B cell (primary cell): ENCODE measurements at regions of chr7 and their contacts with region 1.

Region 1: DNA sequence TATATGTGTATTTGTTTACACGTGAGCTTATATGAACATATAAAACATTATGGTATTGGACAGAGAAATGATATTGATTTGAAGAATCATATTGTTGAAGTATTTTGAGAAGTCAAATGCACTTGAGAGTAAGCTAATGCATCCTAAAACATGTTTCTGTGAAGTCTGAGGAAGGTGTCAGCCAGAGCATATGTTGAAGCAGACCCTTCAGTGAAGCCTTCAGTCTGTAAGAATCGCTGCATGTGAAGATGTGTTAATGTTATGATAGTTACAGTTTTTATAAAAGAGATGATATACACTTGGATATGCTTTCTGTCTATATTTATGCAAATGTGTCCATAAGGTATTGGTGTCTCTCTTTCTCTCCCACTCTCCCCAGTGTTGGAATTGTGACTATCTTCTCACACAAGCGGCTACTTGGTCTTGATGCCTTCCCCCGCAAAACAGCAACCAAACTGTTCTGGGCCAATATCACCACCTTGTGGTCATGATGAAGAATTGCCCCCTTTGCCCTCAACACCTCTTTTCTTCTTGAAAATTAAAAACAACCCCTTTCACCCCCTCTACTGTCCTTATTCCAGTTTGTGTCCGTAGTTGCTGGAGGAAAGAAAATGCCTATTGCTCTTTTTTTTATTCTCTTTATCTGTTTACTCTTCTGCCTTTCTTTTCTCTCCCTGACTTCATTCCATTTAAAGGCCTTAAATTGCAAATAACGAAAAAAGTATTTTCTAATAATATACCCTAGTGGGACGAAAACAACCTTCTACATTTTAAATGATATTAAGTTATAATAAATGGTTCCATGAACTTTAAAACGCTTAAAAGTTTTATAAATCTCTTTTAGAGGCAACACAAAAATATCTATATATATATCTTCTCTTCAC is 64.9 kb downstream of the IKZF1 start:
- DNase-seq: peak; percentile 83
- ATAC-seq: peak; percentile 70
- H3K4me3 ChIP-seq: no peak overlapping the region
- H3K4me3 Mint-ChIP-seq: no peak overlapping the region
- H3K27ac ChIP-seq: peak overlapping the region in 1 of 2 donors; percentile 71
- H3K27ac Mint-ChIP-seq: peak overlapping the region; percentile 74
- H3K4me1 ChIP-seq: peaks cover 35 to 58% of the 10 kb centered on the region in 2 donors
- H3K4me1 Mint-ChIP-seq: peaks cover 91% of the 10 kb centered on the region
- H3K27me3 ChIP-seq: no peaks in the 10 kb centered on the region
- H3K27me3 Mint-ChIP-seq: no peaks in the 10 kb centered on the region
- CTCF ChIP-seq: peak; percentile 92

Region 2: GRCh38 chr7:50092579-50093491 is 276.6 kb before region 1 on chr7 and contains the start of gene ZPBP:
- CTCF ChIA-PET with region 1: interaction called, 5 read pairs
- POLR2A ChIA-PET with region 1: no interaction called
- intact Hi-C with region 1: loop called (anchors 1 kb)
- DNase-seq: peak; percentile 83
- ATAC-seq: peak; percentile 80
- H3K4me3 ChIP-seq: peak within 1 kb of the TSS; percentile 46 to 82 (median 62)
- H3K4me3 Mint-ChIP-seq: peak within 1 kb of the TSS; percentile 94
- H3K27ac ChIP-seq: peak within 1 kb of the TSS; percentile 35 to 43
- H3K27ac Mint-ChIP-seq: peak within 1 kb of the TSS; percentile 72
- H3K4me1 ChIP-seq: peaks cover 4 to 5% of the 10 kb centered on the region in 2 donors
- H3K4me1 Mint-ChIP-seq: peaks cover 5% of the 10 kb centered on the region
- H3K27me3 ChIP-seq: no peaks in the 10 kb centered on the region
- H3K27me3 Mint-ChIP-seq: no peaks in the 10 kb centered on the region
- CTCF ChIP-seq: peak; percentile 97
- total RNA-seq, gene ZPBP: not detected in 2 replicates

Region 3: GRCh38 chr7:50212666-50213621 is 156.4 kb before region 1 on chr7:
- CTCF ChIA-PET with region 1: interaction called, 241 read pairs
- POLR2A ChIA-PET with region 1: interaction called, 4 read pairs
- intact Hi-C with region 1: no loop called
- DNase-seq: peak; percentile 63
- ATAC-seq: peak; percentile 87
- H3K4me3 ChIP-seq: no peak overlapping the region
- H3K4me3 Mint-ChIP-seq: peak overlapping the region; percentile 20
- H3K27ac ChIP-seq: no peak overlapping the region
- H3K27ac Mint-ChIP-seq: peak overlapping the region; percentile 59
- H3K4me1 ChIP-seq: peaks cover 24 to 28% of the 10 kb centered on the region in 2 donors
- H3K4me1 Mint-ChIP-seq: peaks cover 37% of the 10 kb centered on the region
- H3K27me3 ChIP-seq: no peaks in the 10 kb centered on the region
- H3K27me3 Mint-ChIP-seq: no peaks in the 10 kb centered on the region
- CTCF ChIP-seq: no peak

Region 4: GRCh38 chr7:50298811-50299562 is 70.4 kb before region 1 on chr7:
- CTCF ChIA-PET with region 1: interaction called, 111 read pairs
- POLR2A ChIA-PET with region 1: no interaction called
- intact Hi-C with region 1: no loop called
- DNase-seq: peak; percentile 4
- ATAC-seq: no peak
- H3K4me3 ChIP-seq: no peak overlapping the region
- H3K4me3 Mint-ChIP-seq: no peak overlapping the region
- H3K27ac ChIP-seq: peak overlapping the region in 1 of 2 donors; percentile 43
- H3K27ac Mint-ChIP-seq: no peak overlapping the region
- H3K4me1 ChIP-seq: peaks cover 4 to 15% of the 10 kb centered on the region in 2 donors
- H3K4me1 Mint-ChIP-seq: peaks cover 16% of the 10 kb centered on the region
- H3K27me3 ChIP-seq: no peaks in the 10 kb centered on the region
- H3K27me3 Mint-ChIP-seq: no peaks in the 10 kb centered on the region
- CTCF ChIP-seq: no peak

Region 5: GRCh38 chr7:50317221-50317678 is 52.1 kb before region 1 on chr7:
- CTCF ChIA-PET with region 1: interaction called, 111 read pairs
- POLR2A ChIA-PET with region 1: no interaction called
- intact Hi-C with region 1: no loop called
- DNase-seq: peak; percentile 86
- ATAC-seq: peak; percentile 74
- H3K4me3 ChIP-seq: peak overlapping the region in 1 of 5 experiments; percentile 37
- H3K4me3 Mint-ChIP-seq: peak overlapping the region; percentile 73
- H3K27ac ChIP-seq: peak overlapping the region; percentile 54 to 83
- H3K27ac Mint-ChIP-seq: peak overlapping the region; percentile 96
- H3K4me1 ChIP-seq: peaks cover 81 to 86% of the 10 kb centered on the region in 2 donors
- H3K4me1 Mint-ChIP-seq: peaks cover 93% of the 10 kb centered on the region
- H3K27me3 ChIP-seq: no peaks in the 10 kb centered on the region
- H3K27me3 Mint-ChIP-seq: no peaks in the 10 kb centered on the region
- CTCF ChIP-seq: peak; percentile 32

Region 6: DNA sequence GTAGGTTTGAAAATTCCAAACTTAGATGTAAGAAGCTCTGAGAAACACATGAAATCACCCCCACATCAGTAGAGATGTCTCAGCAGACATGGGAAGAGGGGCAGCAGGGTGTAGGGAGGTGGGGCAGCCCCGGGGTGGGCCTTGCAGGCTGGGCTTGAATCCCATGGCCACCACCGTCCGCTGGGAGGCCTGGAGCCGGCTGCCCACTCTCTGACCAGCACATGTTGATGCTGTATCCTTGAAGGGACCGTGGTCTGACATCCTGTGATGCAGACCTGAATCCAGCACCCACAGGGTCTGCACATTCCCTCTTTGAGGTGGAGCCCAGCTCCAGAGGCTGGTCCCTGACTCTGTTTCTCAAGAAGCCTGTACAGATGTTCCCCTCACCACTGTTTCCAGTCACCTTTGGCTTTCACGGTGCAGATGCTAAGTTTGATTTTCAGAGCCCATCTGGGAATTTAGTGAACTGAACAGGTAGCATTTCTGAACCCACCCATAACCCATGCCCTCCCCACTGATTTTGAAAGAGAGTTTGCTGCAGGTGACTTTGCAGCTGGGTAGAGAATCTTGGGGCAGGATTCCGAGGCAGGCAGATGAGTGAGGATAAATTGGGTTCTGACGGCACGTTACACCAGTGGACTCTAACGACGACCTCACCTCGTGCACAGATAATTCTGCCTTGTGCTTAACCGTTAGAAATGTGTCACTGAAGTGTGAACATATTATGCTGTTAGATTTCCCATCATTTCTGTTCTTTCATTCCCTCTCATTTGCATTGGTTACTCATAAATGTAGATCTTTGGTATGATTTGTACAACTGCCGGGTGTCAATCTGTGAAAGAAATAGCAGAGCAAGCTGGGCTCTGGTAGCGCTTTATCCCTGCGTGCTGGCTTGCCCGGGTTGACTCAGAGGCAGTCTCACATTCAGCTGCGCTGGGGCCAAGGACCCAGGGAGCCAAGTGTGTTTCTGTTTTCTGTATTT is 19.1 kb before region 1 on chr7:
- CTCF ChIA-PET with region 1: interaction called, 15 read pairs
- POLR2A ChIA-PET with region 1: interaction called, 4 read pairs
- intact Hi-C with region 1: loop called (anchors 2 kb)
- DNase-seq: peak; percentile 40
- ATAC-seq: peak; percentile 42
- H3K4me3 ChIP-seq: peak overlapping the region in 2 of 5 experiments; percentile 3 to 17
- H3K4me3 Mint-ChIP-seq: peak overlapping the region; percentile 73
- H3K27ac ChIP-seq: peak overlapping the region; percentile 31 to 90
- H3K27ac Mint-ChIP-seq: peak overlapping the region; percentile 88
- H3K4me1 ChIP-seq: peaks cover 49 to 86% of the 10 kb centered on the region in 2 donors
- H3K4me1 Mint-ChIP-seq: peaks cover 90% of the 10 kb centered on the region
- H3K27me3 ChIP-seq: no peaks in the 10 kb centered on the region
- H3K27me3 Mint-ChIP-seq: no peaks in the 10 kb centered on the region
- CTCF ChIP-seq: no peak

Region 7: GRCh38 chr7:50409856-50410745 is 40.7 kb after region 1 on chr7:
- CTCF ChIA-PET with region 1: interaction called, 182 read pairs
- POLR2A ChIA-PET with region 1: interaction called, 4 read pairs
- intact Hi-C with region 1: loop called (anchors 2 kb)
- DNase-seq: peak; percentile 87
- ATAC-seq: peak; percentile 63
- H3K4me3 ChIP-seq: no peak overlapping the region
- H3K4me3 Mint-ChIP-seq: peak overlapping the region; percentile 83
- H3K27ac ChIP-seq: peak overlapping the region; percentile 90 to 94
- H3K27ac Mint-ChIP-seq: peak overlapping the region; percentile 99
- H3K4me1 ChIP-seq: peaks cover 97% of the 10 kb centered on the region in 2 donors
- H3K4me1 Mint-ChIP-seq: peaks cover 95% of the 10 kb centered on the region
- H3K27me3 ChIP-seq: no peaks in the 10 kb centered on the region
- H3K27me3 Mint-ChIP-seq: no peaks in the 10 kb centered on the region
- CTCF ChIP-seq: no peak